Body of pancreas (tissue), 4 donors: ENCODE measurements at regions of chr9 and their contacts with region 1.

Region 1: GRCh38 chr9:129610473-129611301 is 10.2 kb downstream of the C9orf50 start:
- DNase-seq: peak; percentile 78 to 84 (median 82)
- ATAC-seq: peak; percentile 69
- H3K4me3 ChIP-seq: peak overlapping the region; percentile 20 to 54
- H3K27ac ChIP-seq: peak overlapping the region; percentile 69 to 88 (median 83)
- H3K4me1 ChIP-seq: peaks cover 29% of the 10 kb centered on the region
- H3K27me3 ChIP-seq: no peaks in the 10 kb centered on the region
- CTCF ChIP-seq: peak; percentile 58 to 99 (median 82)
- POLR2A ChIP-seq: peak in 1 of 3 donors; percentile 34

Region 2: DNA sequence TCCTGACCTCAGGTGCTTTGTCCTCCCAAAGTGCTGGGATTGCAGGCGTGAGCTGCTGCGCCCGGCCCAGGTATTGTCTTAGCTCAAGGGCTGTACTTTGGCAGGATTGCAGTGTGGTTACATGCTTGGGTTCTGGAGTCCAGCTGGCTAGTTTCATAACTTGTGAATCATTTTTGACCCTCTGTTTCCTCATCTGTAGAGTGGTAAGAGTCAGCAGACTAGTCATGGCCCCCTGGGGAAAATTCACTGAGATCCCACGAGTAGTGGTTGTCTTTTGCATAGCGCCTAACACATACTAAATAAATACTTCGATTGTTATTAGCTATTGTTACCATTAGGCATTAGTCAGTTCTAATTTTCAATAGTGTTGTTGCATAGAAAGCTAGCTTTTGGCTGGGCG is 485.2 kb before region 1 on chr9:
- intact Hi-C with region 1: loop called (anchors 5 kb)
- DNase-seq: no peak
- ATAC-seq: no peak
- H3K4me3 ChIP-seq: no peak overlapping the region
- H3K27ac ChIP-seq: no peak overlapping the region
- H3K4me1 ChIP-seq: no peaks in the 10 kb centered on the region
- H3K27me3 ChIP-seq: no peaks in the 10 kb centered on the region
- CTCF ChIP-seq: no peak
- POLR2A ChIP-seq: no peak

Region 3: GRCh38 chr9:129525656-129526196 is 85.0 kb before region 1 on chr9:
- intact Hi-C with region 1: no loop called
- DNase-seq: no peak
- ATAC-seq: no peak
- H3K4me3 ChIP-seq: no peak overlapping the region
- H3K27ac ChIP-seq: no peak overlapping the region
- H3K4me1 ChIP-seq: no peaks in the 10 kb centered on the region
- H3K27me3 ChIP-seq: no peaks in the 10 kb centered on the region
- CTCF ChIP-seq: no peak
- POLR2A ChIP-seq: no peak

Region 4: GRCh38 chr9:129669141-129669718 is 58.5 kb after region 1 on chr9:
- intact Hi-C with region 1: no loop called
- DNase-seq: no peak
- ATAC-seq: no peak
- H3K4me3 ChIP-seq: no peak overlapping the region
- H3K27ac ChIP-seq: no peak overlapping the region
- H3K4me1 ChIP-seq: peaks cover 6% of the 10 kb centered on the region
- H3K27me3 ChIP-seq: peaks cover 0 to 6% of the 10 kb centered on the region in 2 donors
- CTCF ChIP-seq: no peak
- POLR2A ChIP-seq: no peak